Dorsolateral prefrontal cortex (tissue), 120 donors: ENCODE measurements at regions of chr6 and their contacts with region 1.

Region 1: DNA sequence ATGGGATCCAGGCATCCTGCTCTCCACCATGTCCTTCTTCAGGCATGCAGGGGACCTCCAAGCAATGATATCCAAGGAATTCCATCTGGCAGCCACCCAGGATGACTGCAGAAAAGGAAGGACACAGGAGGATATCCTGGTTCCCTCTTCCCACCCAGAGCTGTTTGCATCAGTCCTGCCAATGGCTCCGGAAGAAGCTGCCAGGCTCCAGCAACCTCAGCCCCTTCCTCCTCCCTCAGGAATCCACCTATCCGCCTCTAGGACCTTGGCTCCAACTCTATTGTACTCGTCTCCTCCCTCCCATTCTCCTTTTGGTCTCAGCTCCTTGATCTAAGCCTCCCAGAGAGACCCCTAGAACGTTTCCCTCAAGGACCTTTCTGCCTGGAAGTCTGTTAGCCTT is 733 bp upstream of the PSORS1C2 start:
- DNase-seq: no peak
- H3K4me3 ChIP-seq: no peak overlapping the region
- H3K27ac ChIP-seq: no peak overlapping the region
- H3K27me3 ChIP-seq: no peaks in the 10 kb centered on the region
- CTCF ChIP-seq: no peak

Region 2: GRCh38 chr6:31366693-31367470 is 227.3 kb after region 1 on chr6:
- intact Hi-C with region 1: loop called (anchors 2 to 5 kb)
- DNase-seq: peak; percentile 42 to 95 (median 87)
- H3K4me3 ChIP-seq: peak overlapping the region; percentile 16 to 68 (median 49)
- H3K27ac ChIP-seq: peak overlapping the region in 39 of 59 donors; percentile 6 to 80 (median 51)
- H3K27me3 ChIP-seq: peaks cover 0 to 26% (median 0%) of the 10 kb centered on the region in 45 donors
- CTCF ChIP-seq: peak; percentile 86 to 99 (median 95)